ENCODE measurements at regions of chr16 and their contacts with region 1.

Region 1: GRCh38 chr16:29182501-29182900 is 197.6 kb downstream of the LAT start:
- DNase-seq: no peak
- H3K4me3 ChIP-seq: no peak overlapping the region
- H3K27ac ChIP-seq: no peak overlapping the region
- H3K4me1 ChIP-seq: peaks cover 4% of the 10 kb centered on the region
- H3K27me3 ChIP-seq: no peaks in the 10 kb centered on the region
- CTCF ChIP-seq: no peak
- POLR2A ChIP-seq: no peak

Region 2: GRCh38 chr16:29156511-29156910 is 26.0 kb before region 1 on chr16:
- CTCF ChIA-PET with region 1: interaction called, 3 read pairs
- POLR2A ChIA-PET with region 1: no interaction called
- dilution Hi-C with region 1: no loop called
- intact Hi-C with region 1: loop called (anchors 2 kb)
- DNase-seq: no peak
- H3K4me3 ChIP-seq: no peak overlapping the region
- H3K27ac ChIP-seq: peak overlapping the region; percentile 96
- H3K4me1 ChIP-seq: peaks cover 25% of the 10 kb centered on the region
- H3K27me3 ChIP-seq: no peaks in the 10 kb centered on the region
- CTCF ChIP-seq: no peak
- POLR2A ChIP-seq: no peak

Measured in endothelial cell of umbilical vein (primary cell).